ENCODE measurements at regions of chr6 and their contacts with region 1.

Region 1: DNA sequence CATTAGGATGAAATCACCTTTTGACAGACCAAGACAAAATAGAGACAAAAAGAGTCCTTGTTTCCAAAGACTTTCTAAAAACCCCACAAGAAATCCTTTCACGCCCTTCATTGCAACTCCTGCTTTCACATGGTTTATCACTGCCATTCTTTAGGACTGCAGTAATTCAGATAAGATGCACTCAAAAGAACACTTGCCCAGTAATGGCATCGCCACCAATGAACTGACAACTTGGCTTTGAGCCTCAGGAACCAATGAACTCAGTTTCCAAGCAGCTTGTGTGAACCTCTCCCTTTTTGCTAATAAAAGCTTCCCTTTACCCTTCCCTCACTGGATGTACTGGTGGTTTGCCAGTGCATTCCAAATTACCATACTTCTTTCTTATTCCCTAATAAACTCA is 21.8 kb downstream of the OSTM1 start:
- DNase-seq: no peak
- H3K4me3 Mint-ChIP-seq: no peak overlapping the region
- H3K27ac Mint-ChIP-seq: no peak overlapping the region
- H3K4me1 Mint-ChIP-seq: no peaks in the 10 kb centered on the region
- H3K27me3 Mint-ChIP-seq: no peaks in the 10 kb centered on the region

Region 2: DNA sequence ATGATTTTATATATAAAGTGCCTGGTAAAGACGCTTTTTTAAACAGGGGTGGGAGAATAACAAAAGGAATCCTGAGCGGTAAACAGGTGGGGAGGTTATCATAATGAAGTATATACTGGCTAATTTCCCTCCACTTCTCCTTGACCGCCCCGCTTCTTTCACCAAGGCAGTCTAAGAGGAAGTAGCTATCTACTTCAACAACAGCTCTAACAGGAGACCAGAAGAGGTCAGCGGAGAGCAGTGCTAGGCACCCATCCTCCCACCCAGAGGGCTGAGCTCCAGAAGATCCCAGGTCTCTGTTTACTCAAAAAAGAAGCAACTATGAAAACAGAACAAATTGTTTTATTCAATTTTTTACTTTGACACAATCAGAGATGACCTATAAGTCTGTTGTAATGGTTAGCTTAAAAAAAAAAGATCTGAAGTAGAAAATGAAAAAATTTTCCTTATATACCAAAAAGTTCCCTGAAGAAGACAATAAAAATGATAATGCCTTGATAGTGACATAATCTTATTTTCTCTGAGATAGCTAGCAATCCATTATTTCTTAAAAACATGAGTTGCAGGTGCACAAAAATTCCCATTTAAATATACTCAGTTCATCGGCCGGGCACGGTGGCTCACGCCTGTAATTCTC is 734.5 kb before region 1 on chr6:
- CTCF ChIA-PET with region 1: no interaction called
- intact Hi-C with region 1: loop called (anchors 10 kb)
- DNase-seq: peak; percentile 62
- H3K4me3 Mint-ChIP-seq: no peak overlapping the region
- H3K27ac Mint-ChIP-seq: no peak overlapping the region
- H3K4me1 Mint-ChIP-seq: peaks cover 17% of the 10 kb centered on the region
- H3K27me3 Mint-ChIP-seq: no peaks in the 10 kb centered on the region

Region 3: GRCh38 chr6:107716688-107717089 is 336.0 kb before region 1 on chr6:
- CTCF ChIA-PET with region 1: no interaction called
- intact Hi-C with region 1: no loop called
- DNase-seq: peak; percentile 89
- H3K4me3 Mint-ChIP-seq: peak overlapping the region; percentile 71
- H3K27ac Mint-ChIP-seq: peak overlapping the region; percentile 93
- H3K4me1 Mint-ChIP-seq: peaks cover 65% of the 10 kb centered on the region
- H3K27me3 Mint-ChIP-seq: no peaks in the 10 kb centered on the region

Region 4: GRCh38 chr6:107731422-107732319 is 321.0 kb before region 1 on chr6:
- CTCF ChIA-PET with region 1: no interaction called
- intact Hi-C with region 1: loop called (anchors 2 kb)
- DNase-seq: peak; percentile 43
- H3K4me3 Mint-ChIP-seq: peak overlapping the region; percentile 80
- H3K27ac Mint-ChIP-seq: peak overlapping the region; percentile 86
- H3K4me1 Mint-ChIP-seq: peaks cover 74% of the 10 kb centered on the region
- H3K27me3 Mint-ChIP-seq: no peaks in the 10 kb centered on the region

Region 5: DNA sequence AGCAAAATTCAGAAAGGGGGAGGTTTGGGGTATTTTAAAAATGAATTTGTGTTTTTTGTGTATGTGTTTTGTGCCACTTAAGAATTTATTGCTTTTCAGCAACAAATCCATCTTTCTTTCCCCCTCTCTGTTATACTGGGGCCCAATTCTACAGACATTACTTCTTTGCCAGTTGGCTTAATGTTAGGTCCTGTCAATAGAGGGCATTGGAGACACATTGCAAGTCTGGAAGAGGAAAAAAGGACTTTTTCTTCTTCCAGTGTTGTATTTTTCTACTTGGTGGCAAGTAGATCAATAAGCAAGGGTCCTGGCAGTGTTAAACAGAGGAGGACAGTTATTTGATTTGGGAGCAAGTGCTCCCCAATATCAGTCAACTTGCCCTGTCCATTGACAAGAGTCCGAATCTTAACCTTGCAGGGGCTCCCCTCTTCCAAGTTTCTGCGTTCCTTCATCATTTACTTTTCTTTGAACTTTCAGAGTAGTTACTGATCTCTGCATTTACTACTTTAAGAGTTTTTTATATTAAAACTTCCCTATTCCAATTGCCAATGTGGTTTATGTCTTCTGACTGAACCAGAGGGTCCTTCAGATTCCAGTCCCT is 252.0 kb before region 1 on chr6:
- CTCF ChIA-PET with region 1: no interaction called
- intact Hi-C with region 1: loop called (anchors 1 kb)
- DNase-seq: no peak
- H3K4me3 Mint-ChIP-seq: no peak overlapping the region
- H3K27ac Mint-ChIP-seq: peak overlapping the region; percentile 1
- H3K4me1 Mint-ChIP-seq: peaks cover 66% of the 10 kb centered on the region
- H3K27me3 Mint-ChIP-seq: no peaks in the 10 kb centered on the region

Region 6: DNA sequence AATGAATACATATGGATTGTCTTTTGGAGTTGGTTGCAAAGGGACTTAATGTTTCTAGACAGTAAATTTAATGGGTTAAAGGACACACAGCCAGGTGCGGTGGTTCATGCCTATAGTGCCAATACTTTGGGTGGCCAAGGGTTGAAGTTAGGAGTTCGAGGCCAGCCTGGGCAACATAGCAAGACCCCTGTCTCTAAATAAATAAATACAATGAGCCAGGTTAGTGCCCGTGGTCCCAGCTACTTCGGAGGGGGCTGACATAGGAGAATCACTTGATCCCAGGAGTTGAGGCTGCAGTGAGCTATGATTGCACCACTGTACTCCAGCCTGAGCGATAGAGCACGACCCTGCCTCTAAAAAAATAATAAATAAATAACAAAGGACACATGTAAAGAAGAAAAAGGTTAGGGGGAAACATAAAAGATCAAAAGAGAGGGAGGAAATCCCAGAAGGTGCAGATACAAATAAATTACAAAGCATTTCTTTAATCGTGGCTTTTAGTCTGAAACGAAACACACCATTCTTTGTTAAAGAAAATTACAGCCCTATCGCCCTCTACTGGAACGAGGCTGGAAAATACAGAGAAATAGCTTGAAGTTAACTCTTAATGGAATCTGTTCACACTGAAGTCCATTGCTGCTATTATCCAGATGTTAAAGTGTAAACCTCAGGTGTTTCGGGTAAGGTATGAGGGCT is 186.0 kb before region 1 on chr6:
- CTCF ChIA-PET with region 1: interaction called, 7 read pairs
- intact Hi-C with region 1: loop called (anchors 1 kb)
- DNase-seq: peak; percentile 56
- H3K4me3 Mint-ChIP-seq: no peak overlapping the region
- H3K27ac Mint-ChIP-seq: no peak overlapping the region
- H3K4me1 Mint-ChIP-seq: peaks cover 35% of the 10 kb centered on the region
- H3K27me3 Mint-ChIP-seq: no peaks in the 10 kb centered on the region

Region 7: DNA sequence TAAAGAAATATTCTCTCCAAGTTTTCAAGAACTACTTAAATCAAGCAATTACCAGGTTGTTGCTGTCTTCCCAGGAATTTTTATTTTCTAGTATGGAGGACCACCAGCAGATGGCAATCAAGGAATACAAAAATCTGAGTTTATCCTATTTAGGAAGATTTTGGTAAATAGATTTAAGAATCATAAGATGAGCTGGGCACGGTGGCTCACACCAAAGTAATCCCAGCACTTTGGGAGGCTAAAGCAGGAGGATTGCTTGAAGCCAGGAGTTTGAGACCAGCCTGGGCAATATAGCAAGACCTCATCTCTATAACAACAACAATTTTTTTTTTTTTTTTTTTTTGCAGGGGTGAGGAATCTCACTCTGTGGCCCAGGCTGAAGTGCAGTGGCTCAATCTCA is 75.4 kb before region 1 on chr6:
- CTCF ChIA-PET with region 1: interaction called, 57 read pairs
- intact Hi-C with region 1: loop called (anchors 1 kb)
- DNase-seq: no peak
- H3K4me3 Mint-ChIP-seq: no peak overlapping the region
- H3K27ac Mint-ChIP-seq: no peak overlapping the region
- H3K4me1 Mint-ChIP-seq: no peaks in the 10 kb centered on the region
- H3K27me3 Mint-ChIP-seq: no peaks in the 10 kb centered on the region

Region 8: DNA sequence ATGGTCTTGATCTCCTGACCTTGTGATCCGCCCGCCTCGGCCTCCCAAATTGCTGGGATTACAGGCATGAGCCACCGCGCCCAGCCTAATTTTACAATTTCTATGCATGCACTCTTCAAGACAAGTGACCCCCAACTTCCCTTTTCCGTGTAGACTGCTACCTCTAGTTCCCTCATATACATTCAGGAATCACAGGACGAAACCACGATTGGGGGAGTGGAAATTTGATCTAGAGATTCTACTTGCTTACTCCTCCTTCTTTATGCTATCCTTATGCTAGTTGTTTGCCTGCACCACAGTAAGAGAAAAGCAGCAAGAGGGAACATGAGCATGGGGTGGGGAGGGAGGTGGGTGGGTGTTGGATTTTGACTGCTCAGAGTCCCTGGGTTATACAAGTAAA is 13.0 kb before region 1 on chr6:
- CTCF ChIA-PET with region 1: interaction called, 17 read pairs
- intact Hi-C with region 1: no loop called
- DNase-seq: no peak
- H3K4me3 Mint-ChIP-seq: no peak overlapping the region
- H3K27ac Mint-ChIP-seq: no peak overlapping the region
- H3K4me1 Mint-ChIP-seq: no peaks in the 10 kb centered on the region
- H3K27me3 Mint-ChIP-seq: no peaks in the 10 kb centered on the region

Region 9: GRCh38 chr6:108730635-108731525 is 678.2 kb after region 1 on chr6:
- CTCF ChIA-PET with region 1: no interaction called
- intact Hi-C with region 1: no loop called
- DNase-seq: no peak
- H3K4me3 Mint-ChIP-seq: no peak overlapping the region
- H3K27ac Mint-ChIP-seq: no peak overlapping the region
- H3K4me1 Mint-ChIP-seq: no peaks in the 10 kb centered on the region
- H3K27me3 Mint-ChIP-seq: peaks cover 2% of the 10 kb centered on the region